RWPE1 (cell line): ENCODE measurements at regions of chr5 and their contacts with region 1.

Region 1: GRCh38 chr5:141811287-141812155 is 66.7 kb downstream of the PCDH1 start:
- DNase-seq: peak; percentile 76
- H3K27ac ChIP-seq: no peak overlapping the region
- CTCF ChIP-seq: peak; percentile 80

Region 2: DNA sequence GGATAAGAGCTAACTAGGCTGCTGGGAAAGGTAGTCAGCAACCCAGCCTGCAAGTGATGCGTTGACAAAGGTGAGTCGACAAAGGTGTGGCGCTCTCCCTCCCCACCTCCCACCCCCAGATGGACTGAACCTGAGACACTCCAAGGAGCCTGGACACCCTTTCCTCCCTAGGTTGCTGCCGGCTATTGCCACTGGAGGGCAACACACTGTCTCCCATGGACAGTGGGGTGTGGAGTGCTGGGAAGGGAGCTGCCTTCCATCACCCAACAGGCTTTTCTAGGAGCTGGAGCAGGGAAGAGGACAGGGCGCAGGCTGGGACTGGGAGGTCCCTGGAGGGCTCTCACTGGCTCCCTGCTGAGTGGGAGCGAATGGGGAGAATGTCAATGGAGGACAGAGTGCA is 54.1 kb before region 1 on chr5:
- CTCF ChIA-PET with region 1: interaction called, 11 read pairs
- POLR2A ChIA-PET with region 1: no interaction called
- DNase-seq: peak; percentile 88
- H3K27ac ChIP-seq: no peak overlapping the region
- CTCF ChIP-seq: no peak; the same call in 1 of the 2 replicates

Region 3: GRCh38 chr5:141799507-141800167 is 11.9 kb before region 1 on chr5:
- CTCF ChIA-PET with region 1: interaction called, 11 read pairs
- POLR2A ChIA-PET with region 1: no interaction called
- DNase-seq: no peak
- H3K27ac ChIP-seq: no peak overlapping the region
- CTCF ChIP-seq: no peak